Activated T-helper 1 cell treated with anti-CD3 and anti-CD28 coated beads, Interleukin-12 subunit alpha, Interleukin-12 subunit beta, Interleukin-2, Interleukin-4 antibody, amounts not matched to agents 30 ng/mL and 10 ng/mL and 1 ng/mL, durations not matched to agents 14 hours and 24 hours and 36 hours (primary cell): ENCODE measurements at regions of chr10 and their contacts with region 1.

Region 1: GRCh38 chr10:87094373-87095235 is at the starts of genes GLUD1 and SHLD2:
- DNase-seq: peak; percentile 91
- H3K4me3 Mint-ChIP-seq: peak within 1 kb of the TSS; percentile 98
- H3K27ac Mint-ChIP-seq: peak within 1 kb of the TSS; percentile 95
- H3K4me1 Mint-ChIP-seq: peaks cover 45% of the 10 kb centered on the region
- H3K27me3 Mint-ChIP-seq: no peaks in the 10 kb centered on the region
- total RNA-seq, gene GLUD1: 116 and 125 TPM in 2 replicates
- total RNA-seq, gene SHLD2: 41.3 and 42.1 TPM in 2 replicates

Region 2: DNA sequence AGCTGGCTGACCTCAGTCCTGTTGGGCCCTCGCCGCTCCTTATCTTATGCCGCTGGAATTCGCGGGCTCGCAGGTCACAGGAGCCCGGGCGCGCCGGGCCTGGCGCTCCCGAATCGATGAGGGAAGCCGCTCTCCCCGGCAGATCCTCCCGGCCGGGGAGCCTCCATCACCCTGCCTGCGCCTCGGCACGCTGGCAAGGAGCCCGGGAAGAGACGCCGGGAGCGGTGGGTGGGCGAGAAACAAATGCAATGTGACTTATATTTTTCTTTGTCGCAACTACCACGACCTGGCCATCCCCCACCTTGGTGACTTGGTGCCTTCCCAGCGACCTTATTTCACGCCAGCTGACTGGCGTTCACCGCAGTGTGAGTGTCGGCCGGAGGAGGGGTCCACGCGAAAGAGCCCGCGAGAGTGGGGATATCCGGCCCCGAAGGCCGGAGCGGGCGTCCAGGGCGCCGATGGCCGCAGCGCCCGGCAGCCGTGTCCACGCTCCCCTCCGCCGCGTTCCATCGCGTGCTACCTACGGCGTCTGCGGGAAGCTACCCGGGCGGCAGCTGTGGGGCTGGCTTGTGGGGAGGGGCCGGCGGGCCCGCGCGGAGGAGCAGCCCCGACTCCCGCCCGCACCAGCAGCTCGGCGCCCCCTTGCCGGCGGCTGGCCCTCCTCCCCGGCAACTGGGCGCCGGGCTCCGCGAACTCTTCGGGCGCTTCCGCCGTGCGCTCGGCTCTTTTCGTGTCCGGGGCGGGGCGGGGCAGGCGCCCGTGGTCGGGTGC is 338.7 kb before region 1 on chr10:
- intact Hi-C with region 1: loop called (anchors 2 kb)
- DNase-seq: peak; percentile 86
- H3K4me3 Mint-ChIP-seq: peak overlapping the region; percentile 86
- H3K27ac Mint-ChIP-seq: peak overlapping the region; percentile 86
- H3K4me1 Mint-ChIP-seq: peaks cover 52% of the 10 kb centered on the region
- H3K27me3 Mint-ChIP-seq: peaks cover 38% of the 10 kb centered on the region

Region 3: DNA sequence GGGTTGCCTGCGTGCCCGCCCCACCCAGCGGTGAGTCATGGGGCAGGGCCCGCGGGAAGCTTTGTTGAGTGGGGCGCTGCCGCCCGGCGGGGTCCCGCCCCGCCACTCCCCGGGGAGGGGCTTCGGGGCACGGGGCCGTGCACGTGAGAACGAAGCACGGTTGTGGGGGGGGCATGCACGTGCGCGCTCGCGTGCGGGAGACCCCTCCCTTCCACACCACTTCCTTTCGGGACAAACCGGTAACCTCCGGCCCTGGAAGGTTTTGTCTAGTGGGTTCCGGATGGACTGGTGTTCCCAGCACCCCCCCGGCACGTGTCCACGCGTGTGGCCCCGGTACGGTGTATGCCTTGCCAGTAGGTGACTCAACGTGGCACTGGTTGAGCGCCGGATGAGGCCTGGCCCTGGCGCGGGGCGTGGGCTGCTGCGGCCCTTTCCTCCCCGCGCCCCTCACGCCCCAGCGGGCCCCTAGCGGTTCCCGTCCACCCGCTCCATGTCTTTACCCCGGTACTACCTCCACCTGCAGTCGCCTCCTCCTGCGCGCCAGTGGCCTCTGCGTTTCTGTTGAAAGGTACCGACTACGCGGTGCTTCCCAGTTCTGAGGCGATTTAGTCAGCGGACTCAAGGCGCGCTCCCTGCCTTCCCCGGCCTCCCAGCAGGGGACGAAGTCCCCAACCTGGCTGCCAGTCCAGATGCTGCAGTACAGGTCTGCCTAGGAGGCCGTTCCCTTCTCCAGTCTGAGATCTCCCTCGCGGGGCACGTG is 123.2 kb before region 1 on chr10:
- intact Hi-C with region 1: loop called (anchors 1 kb)
- DNase-seq: peak; percentile 76
- H3K4me3 Mint-ChIP-seq: peak overlapping the region; percentile 77
- H3K27ac Mint-ChIP-seq: peak overlapping the region; percentile 76
- H3K4me1 Mint-ChIP-seq: peaks cover 12% of the 10 kb centered on the region
- H3K27me3 Mint-ChIP-seq: peaks cover 35% of the 10 kb centered on the region

Region 4: DNA sequence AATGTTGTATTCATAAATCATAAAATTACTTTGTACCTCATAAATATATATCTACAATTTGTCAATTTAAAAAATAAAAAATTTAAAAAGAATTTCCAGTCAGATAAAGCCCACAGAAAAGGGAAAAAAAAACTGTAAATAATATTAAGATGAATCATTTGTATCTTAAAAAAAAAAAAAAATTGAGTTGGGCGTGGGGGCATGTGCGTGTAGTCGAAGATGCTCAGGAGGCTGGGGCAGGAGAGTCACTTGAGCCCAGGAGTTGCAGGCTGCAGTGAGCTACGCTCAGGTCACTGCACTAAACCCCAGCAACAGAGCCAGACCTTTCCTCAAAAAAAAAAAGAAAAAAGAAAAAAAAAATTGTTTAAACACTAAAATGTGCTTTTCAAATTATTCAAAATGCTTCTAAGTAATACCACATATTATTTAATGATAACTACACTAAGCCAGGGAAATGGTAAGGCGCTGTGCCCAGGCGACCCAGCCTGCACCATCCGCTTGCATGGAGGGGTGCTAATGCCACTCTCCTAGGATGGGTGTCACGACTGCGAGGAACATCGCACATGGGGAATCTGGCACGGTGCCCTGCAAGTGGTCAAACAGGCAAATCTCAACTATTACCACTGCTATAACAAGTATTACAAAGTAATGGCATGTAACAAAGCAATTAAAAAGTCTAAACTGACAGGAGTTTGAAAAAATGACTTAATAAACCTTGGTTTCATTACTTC is 15.3 kb before region 1 on chr10:
- intact Hi-C with region 1: loop called (anchors 1 kb)
- DNase-seq: no peak
- H3K4me3 Mint-ChIP-seq: no peak overlapping the region
- H3K27ac Mint-ChIP-seq: no peak overlapping the region
- H3K4me1 Mint-ChIP-seq: peaks cover 30% of the 10 kb centered on the region
- H3K27me3 Mint-ChIP-seq: no peaks in the 10 kb centered on the region

Region 5: DNA sequence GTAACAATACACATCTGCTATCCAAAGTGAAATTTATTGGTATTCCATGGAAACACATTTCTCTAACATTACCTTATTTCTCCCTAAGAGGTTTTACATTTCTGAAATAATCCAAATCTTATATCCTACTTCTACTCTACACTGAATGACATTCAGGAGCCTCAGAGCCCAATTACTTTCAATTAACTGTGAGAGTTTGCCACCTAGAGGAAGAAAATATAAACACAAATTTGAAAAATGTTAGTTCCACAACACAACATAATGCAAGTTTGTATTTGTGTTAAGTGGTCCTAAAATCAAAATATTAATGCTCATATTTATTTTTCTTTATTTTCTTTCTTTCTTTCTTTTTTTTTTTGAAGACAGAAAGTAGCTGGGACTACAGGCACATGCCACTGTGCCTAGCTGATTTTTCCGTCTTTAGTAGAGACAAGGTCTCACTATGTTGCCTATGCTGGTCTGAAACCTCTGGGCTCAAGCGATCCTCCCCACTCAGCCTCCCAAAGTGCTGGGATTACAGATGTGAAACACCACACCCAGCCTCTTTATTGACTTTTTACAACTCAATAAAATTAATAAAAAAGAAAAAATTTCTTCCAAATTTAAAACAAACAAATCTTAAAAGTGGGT is 677.4 kb after region 1 on chr10:
- intact Hi-C with region 1: loop called (anchors 10 kb)
- DNase-seq: no peak
- H3K4me3 Mint-ChIP-seq: no peak overlapping the region
- H3K27ac Mint-ChIP-seq: no peak overlapping the region
- H3K4me1 Mint-ChIP-seq: peaks cover 5% of the 10 kb centered on the region
- H3K27me3 Mint-ChIP-seq: no peaks in the 10 kb centered on the region